K562 (cell line): ENCODE measurements at regions of chr7 and their contacts with region 1.

Region 1: DNA sequence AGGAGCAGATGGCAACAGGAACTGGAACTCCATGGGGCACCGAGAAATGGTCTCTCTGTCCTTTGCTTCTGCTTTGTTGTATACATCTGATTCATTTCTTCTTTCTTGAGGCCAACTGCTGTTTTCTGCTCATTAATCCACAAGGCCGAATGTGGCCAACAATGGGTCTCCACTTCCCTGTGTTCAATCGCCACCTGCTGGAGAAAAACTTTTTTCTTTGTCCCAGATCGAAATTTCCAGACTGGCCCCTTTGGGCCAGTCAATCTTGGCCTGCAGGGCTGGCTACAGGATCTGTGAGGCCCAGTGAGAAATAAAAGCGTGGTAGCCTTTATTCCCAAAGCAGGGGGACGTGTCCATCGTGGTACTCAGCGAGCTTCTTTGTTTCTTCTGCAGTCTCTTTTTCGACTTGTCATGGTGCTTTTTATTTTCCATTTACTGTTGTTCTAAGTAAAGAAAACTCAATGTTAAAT is 58.8 kb downstream of the PARP12 start:
- DNase-seq: peak; percentile 81 to 84 (median 84)
- ATAC-seq: peak; percentile 73
- H3K4me3 ChIP-seq: no peak overlapping the region
- H3K27ac ChIP-seq: no peak overlapping the region
- H3K4me1 ChIP-seq: peaks cover 10 to 11% of the 10 kb centered on the region in 2 experiments; a peak in 4 of 5 replicates
- H3K27me3 ChIP-seq: peaks cover 0 to 9% of the 10 kb centered on the region in 2 experiments; a peak in 2 of 5 replicates
- CTCF ChIP-seq: peak; percentile 85 to 92 (median 88)
- EP300 ChIP-seq: no peak
- POLR2A ChIP-seq: no peak
- RAD21 ChIP-seq: peak; percentile 83 to 94

Region 2: GRCh38 chr7:139431010-139431409 is 572.9 kb before region 1 on chr7:
- CTCF ChIA-PET with region 1: interaction called, 3 read pairs
- POLR2A ChIA-PET with region 1: no interaction called
- in situ Hi-C with region 1: no loop called
- intact Hi-C with region 1: loop called (anchors 5 kb)
- DNase-seq: no peak
- ATAC-seq: no peak
- H3K4me3 ChIP-seq: no peak overlapping the region
- H3K27ac ChIP-seq: no peak overlapping the region
- H3K4me1 ChIP-seq: peaks cover 4 to 5% of the 10 kb centered on the region in 2 experiments; a peak in 3 of 5 replicates
- H3K27me3 ChIP-seq: no peaks in the 10 kb centered on the region
- CTCF ChIP-seq: no peak
- EP300 ChIP-seq: no peak
- POLR2A ChIP-seq: no peak
- RAD21 ChIP-seq: no peak

Region 3: GRCh38 chr7:139620676-139621344 is 383.1 kb before region 1 on chr7:
- CTCF ChIA-PET with region 1: interaction called, 42 read pairs
- POLR2A ChIA-PET with region 1: interaction called, 3 read pairs
- in situ Hi-C with region 1: no loop called
- intact Hi-C with region 1: loop called (anchors 5 kb)
- DNase-seq: peak; percentile 75 to 91 (median 83)
- ATAC-seq: peak; percentile 94
- H3K4me3 ChIP-seq: no peak overlapping the region
- H3K27ac ChIP-seq: no peak overlapping the region
- H3K4me1 ChIP-seq: peaks cover 0 to 6% of the 10 kb centered on the region in 2 experiments; a peak in 2 of 5 replicates
- H3K27me3 ChIP-seq: no peaks in the 10 kb centered on the region
- CTCF ChIP-seq: peak; percentile 91 to 97 (median 95)
- EP300 ChIP-seq: 0 out of 2 replicates have a peak, but pooled peaks have one; percentile 7
- POLR2A ChIP-seq: no peak
- RAD21 ChIP-seq: peak; percentile 80 to 84

Region 4: DNA sequence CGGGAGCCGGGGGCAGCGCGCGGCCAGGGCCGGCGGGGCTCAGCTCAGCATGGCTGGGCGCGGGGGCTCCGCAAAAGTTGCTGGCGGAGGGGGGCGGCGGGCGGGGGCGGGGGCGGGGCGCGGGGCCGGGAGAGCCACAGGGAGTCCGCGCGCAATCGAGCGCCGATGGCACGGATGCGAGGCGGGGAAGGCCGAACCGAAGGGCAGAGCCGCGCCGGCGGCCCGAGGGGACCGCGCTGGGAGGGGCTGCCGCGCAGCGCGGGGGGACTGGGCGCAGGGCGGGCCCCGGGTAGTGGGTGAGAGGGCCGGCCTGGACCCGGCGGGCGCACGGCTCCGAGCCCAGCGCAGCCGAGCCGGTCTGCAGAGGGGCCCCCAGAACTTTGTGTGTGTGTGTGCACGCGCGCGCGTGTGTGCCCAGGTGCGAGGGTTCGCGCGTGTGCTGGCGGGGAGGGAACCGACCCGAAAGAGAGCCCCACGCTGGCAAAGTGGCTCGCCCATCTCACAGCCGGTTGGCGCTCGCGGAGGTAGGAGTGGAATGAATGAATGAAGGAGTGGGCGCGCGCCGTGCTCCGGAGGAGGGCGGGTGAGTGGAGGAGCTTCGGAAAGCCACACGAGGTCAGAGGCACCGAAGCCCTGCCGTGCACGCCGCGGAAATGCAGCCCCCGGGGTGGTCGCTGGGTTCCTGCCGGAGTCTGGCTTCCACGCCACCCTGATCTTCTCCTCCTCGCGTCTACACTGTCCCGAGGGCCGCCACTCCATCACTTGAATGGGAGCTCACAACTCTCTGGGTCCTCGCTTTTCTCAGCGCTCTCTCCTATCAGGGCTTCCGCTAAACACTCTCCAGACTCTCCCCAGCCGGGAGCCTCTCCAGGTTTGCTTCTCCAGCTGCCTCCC is 225.8 kb before region 1 on chr7 and contains the start of gene HIPK2:
- CTCF ChIA-PET with region 1: interaction called, 17 read pairs
- POLR2A ChIA-PET with region 1: no interaction called
- in situ Hi-C with region 1: loop called (anchors 5 kb)
- intact Hi-C with region 1: loop called (anchors 1 kb)
- DNase-seq: peak; percentile 90 to 99 (median 96)
- ATAC-seq: peak; percentile 87
- H3K4me3 ChIP-seq: peak within 1 kb of the TSS; percentile 70
- H3K27ac ChIP-seq: peak within 1 kb of the TSS; percentile 62
- H3K4me1 ChIP-seq: peaks cover 14 to 15% of the 10 kb centered on the region in 2 experiments; a peak in 4 of 5 replicates
- H3K27me3 ChIP-seq: peaks cover 6 to 30% of the 10 kb centered on the region in 2 experiments; a peak in 4 of 5 replicates
- CTCF ChIP-seq: no peak
- EP300 ChIP-seq: no peak
- POLR2A ChIP-seq: peak; percentile 46; the same call in 1 of the 2 replicates
- RAD21 ChIP-seq: no peak
- polyA plus RNA-seq, gene HIPK2: 0.69 to 1.6 TPM

Region 5: DNA sequence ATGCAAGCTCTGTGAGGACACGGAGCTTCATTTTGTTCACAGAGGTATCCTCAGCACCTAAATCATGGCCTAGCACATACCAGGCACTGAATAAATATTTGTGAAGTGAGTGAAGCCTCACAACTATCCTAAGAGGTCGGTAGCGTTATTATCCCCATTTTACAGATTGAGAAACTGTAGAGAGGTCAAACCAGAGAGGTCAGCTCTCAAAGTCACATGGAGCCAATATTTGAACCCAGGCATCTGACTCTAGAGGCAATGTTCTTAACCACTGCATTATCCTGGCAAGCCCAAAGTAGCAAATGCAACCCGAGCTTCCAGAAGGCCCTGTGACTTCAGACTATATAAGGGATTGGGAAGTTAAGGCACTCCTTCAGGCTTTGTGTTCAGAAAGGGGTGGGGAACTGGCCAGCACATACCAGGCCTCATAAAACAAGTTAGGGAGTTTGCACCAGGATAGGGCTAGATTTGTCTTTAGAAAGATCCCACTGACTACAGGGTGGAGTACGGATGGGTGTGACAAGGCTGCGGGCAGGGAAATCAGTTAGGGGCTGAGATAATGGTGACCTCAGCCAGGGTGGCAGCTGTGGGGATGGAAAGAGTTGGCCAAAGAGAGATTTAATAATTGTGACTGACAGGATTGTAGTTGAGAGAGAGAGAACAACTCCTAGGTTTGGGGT is 73.5 kb before region 1 on chr7:
- CTCF ChIA-PET with region 1: no interaction called
- POLR2A ChIA-PET with region 1: no interaction called
- in situ Hi-C with region 1: no loop called
- intact Hi-C with region 1: no loop called
- DNase-seq: no peak
- ATAC-seq: no peak; the same call in 2 of the 3 replicates
- H3K4me3 ChIP-seq: no peak overlapping the region
- H3K27ac ChIP-seq: no peak overlapping the region
- H3K4me1 ChIP-seq: no peaks in the 10 kb centered on the region; a peak in 1 of 5 replicates
- H3K27me3 ChIP-seq: no peaks in the 10 kb centered on the region
- CTCF ChIP-seq: no peak
- EP300 ChIP-seq: no peak
- POLR2A ChIP-seq: no peak
- RAD21 ChIP-seq: no peak

Region 6: GRCh38 chr7:140017543-140017942 is 13.6 kb after region 1 on chr7:
- CTCF ChIA-PET with region 1: no interaction called
- POLR2A ChIA-PET with region 1: interaction called, 13 read pairs
- in situ Hi-C with region 1: no loop called
- intact Hi-C with region 1: no loop called
- DNase-seq: no peak
- ATAC-seq: peak; percentile 24
- H3K4me3 ChIP-seq: no peak overlapping the region
- H3K27ac ChIP-seq: no peak overlapping the region
- H3K4me1 ChIP-seq: peaks cover 0 to 16% of the 10 kb centered on the region in 2 experiments; a peak in 1 of 5 replicates
- H3K27me3 ChIP-seq: peaks cover 28 to 43% of the 10 kb centered on the region in 2 experiments
- CTCF ChIP-seq: no peak
- EP300 ChIP-seq: no peak
- POLR2A ChIP-seq: no peak
- RAD21 ChIP-seq: no peak

Region 7: DNA sequence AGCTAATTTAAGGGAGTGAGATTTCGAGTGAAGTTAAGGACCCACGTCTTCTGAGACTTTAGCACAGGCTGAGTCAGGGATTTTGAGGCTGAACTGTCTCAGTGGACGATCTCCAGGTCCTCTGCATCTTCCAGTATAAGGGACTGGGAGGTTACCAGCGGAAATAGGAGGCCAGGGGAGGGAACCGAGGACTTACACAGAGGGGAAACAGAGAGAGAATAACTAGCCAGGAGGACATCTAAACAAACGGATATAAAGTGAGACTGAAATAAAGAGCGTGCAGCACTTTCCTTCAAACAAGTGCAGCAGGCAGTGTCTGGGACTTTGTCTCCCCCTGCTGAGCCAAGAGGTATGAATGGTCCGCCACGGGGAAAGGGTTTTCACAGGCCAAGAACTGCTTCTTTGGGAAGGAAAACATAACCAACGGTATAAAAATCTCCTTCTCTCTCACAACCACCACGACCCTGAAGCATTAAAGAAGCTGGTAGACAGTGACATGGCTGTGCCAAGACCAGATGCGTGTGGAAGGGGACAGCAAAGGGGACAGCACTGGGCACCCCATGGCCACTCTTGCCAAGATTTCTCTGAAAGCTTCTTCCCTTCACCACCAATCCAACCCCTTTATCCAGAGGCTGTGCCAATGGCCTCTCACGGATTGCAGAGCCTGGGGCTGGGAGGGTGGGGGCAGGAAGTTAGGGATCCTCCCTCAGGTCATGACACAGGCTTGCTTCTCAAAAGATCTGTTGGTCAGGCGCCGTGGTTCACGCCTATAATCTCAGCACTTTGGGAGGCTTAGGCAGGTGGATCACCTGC is 322.4 kb after region 1 on chr7:
- CTCF ChIA-PET with region 1: interaction called, 4 read pairs
- POLR2A ChIA-PET with region 1: interaction called, 4 read pairs
- in situ Hi-C with region 1: no loop called
- intact Hi-C with region 1: loop called (anchors 1 kb)
- DNase-seq: peak; percentile 67 to 87 (median 78)
- ATAC-seq: peak; percentile 88
- H3K4me3 ChIP-seq: no peak overlapping the region
- H3K27ac ChIP-seq: no peak overlapping the region
- H3K4me1 ChIP-seq: peaks cover 28 to 29% of the 10 kb centered on the region in 2 experiments
- H3K27me3 ChIP-seq: no peaks in the 10 kb centered on the region
- CTCF ChIP-seq: peak; percentile 92 to 98 (median 97)
- EP300 ChIP-seq: no peak
- POLR2A ChIP-seq: no peak
- RAD21 ChIP-seq: peak; percentile 97 to 99